Activated naive CD4-positive, alpha-beta T cell treated with anti-CD3 and anti-CD28 coated beads for 36 hours (primary cell): ENCODE measurements at regions of chr2 and their contacts with region 1.

Region 1: DNA sequence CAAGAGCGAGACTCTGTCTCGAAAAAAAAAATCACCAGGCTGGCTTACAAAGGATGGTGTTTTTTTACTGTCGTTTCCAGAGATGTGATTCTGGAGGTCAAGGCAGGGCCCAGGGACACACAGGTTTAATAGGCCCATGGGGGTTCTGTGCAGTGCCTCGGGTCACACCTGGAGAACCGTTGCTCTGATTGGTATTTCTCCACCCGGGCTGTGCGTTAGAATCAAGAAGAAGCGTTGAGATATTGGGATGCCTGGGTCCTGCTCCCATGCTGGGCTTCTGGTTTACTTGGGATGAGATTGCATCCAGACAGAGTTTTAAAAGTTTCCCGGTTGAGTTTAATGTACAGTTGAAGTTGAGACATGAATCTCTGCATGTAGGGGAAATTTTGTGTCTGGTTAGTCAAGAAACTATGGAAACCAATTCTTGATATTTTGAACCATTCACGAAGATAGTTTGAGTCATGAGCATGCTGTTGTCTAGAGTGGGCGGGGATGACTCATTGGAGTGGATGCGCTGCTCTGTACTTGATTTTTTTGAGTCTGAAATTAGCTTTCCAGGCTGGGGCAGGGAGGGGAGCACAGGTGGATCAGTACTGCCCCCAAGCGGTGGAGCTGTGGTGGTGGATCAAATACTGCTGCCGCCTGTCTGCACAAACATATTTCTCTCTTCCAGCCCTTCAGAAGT is 50.1 kb downstream of the GREB1 start:
- DNase-seq: peak; percentile 96
- H3K4me3 Mint-ChIP-seq: no peak overlapping the region
- H3K27ac Mint-ChIP-seq: peak overlapping the region; percentile 6
- H3K4me1 Mint-ChIP-seq: peaks cover 19% of the 10 kb centered on the region
- H3K27me3 Mint-ChIP-seq: peaks cover 6% of the 10 kb centered on the region

Region 2: DNA sequence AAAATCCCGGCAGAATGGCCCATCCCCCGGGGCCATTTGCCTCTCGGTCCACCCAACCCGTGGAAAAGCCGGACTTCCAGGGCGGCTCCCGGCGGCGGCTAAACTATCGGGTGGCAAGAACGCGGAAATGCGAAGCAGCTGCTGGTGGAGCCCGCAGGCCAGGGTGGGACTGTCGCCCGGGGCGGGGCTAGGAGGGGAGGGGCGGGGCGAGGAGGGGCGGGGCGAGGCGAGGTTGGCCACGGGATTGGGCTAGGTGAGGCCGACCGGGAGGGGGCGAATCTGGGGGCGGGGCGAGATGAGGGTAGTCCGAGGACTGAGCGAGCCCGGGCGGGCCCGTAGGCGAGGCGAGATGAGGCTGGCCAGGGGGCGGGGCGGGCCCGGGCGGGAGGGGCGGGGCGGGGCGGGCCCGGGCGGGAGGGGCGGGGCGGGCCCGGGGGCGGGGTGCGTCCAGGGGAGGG is 429.0 kb before region 1 on chr2:
- CTCF ChIA-PET with region 1: no interaction called
- intact Hi-C with region 1: loop called (anchors 1 kb)
- DNase-seq: peak; percentile 99
- H3K4me3 Mint-ChIP-seq: peak overlapping the region; percentile 76
- H3K27ac Mint-ChIP-seq: peak overlapping the region; percentile 61
- H3K4me1 Mint-ChIP-seq: peaks cover 9% of the 10 kb centered on the region
- H3K27me3 Mint-ChIP-seq: no peaks in the 10 kb centered on the region

Region 3: GRCh38 chr2:11344342-11344955 is 239.5 kb before region 1 on chr2 and contains the start of gene ROCK2:
- CTCF ChIA-PET with region 1: interaction called, 4 read pairs
- intact Hi-C with region 1: loop called (anchors 2 kb)
- DNase-seq: peak; percentile 72
- H3K4me3 Mint-ChIP-seq: peak within 1 kb of the TSS; percentile 99
- H3K27ac Mint-ChIP-seq: peak within 1 kb of the TSS; percentile 85
- H3K4me1 Mint-ChIP-seq: peaks cover 29% of the 10 kb centered on the region
- H3K27me3 Mint-ChIP-seq: no peaks in the 10 kb centered on the region
- total RNA-seq, gene ROCK2: 8.4 to 9.4 TPM

Region 4: DNA sequence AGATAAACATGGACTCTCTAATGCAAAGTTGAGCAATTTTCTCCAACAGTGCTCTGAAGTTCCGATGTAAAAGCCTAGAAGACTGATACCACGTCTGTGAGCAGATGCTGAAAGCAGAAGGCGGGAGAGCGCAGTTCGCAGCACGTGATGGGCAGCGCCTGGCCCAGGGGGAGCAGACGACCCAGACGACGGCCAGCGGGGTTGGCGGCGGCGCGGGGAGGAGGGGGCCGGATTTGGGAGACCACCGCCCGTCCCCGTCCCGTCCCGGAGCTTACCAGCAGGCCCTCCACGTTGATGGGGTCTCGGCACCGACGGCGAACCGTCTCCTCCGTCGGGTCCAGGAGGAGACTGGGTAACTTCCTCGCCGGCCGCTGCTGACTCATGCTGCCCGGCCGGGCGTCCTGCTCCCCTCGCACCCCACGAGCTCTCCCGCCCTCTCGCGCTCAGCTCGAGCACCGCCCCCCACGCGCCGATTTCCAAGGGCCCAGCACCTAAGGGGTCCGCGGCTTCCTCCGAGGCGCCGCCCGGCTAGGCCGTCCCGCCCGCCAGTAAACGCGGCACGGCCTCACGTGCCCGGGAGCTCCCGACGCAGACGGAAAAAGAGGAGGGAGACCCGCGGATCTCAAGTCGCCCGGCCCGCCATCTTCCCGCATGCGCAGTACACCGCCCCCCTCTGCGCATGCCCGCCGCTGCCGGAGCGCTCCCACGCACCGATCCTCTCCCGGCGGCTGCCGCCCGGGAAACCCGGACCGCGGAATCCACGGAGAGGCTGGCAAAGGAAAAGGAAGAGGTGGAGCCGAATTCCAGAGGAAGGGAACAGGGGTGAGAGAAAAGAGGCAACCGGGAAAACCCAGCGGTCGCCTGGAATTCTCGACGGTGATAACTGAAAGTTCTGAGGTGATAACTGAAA is 118.2 kb before region 1 on chr2 and contains the start of gene E2F6:
- CTCF ChIA-PET with region 1: interaction called, 28 read pairs
- intact Hi-C with region 1: loop called (anchors 1 kb)
- DNase-seq: peak; percentile 89
- H3K4me3 Mint-ChIP-seq: peak within 1 kb of the TSS; percentile 91
- H3K27ac Mint-ChIP-seq: peak within 1 kb of the TSS; percentile 83
- H3K4me1 Mint-ChIP-seq: peaks cover 40% of the 10 kb centered on the region
- H3K27me3 Mint-ChIP-seq: no peaks in the 10 kb centered on the region
- total RNA-seq, gene E2F6: 8.7 to 9.4 TPM

Region 5: DNA sequence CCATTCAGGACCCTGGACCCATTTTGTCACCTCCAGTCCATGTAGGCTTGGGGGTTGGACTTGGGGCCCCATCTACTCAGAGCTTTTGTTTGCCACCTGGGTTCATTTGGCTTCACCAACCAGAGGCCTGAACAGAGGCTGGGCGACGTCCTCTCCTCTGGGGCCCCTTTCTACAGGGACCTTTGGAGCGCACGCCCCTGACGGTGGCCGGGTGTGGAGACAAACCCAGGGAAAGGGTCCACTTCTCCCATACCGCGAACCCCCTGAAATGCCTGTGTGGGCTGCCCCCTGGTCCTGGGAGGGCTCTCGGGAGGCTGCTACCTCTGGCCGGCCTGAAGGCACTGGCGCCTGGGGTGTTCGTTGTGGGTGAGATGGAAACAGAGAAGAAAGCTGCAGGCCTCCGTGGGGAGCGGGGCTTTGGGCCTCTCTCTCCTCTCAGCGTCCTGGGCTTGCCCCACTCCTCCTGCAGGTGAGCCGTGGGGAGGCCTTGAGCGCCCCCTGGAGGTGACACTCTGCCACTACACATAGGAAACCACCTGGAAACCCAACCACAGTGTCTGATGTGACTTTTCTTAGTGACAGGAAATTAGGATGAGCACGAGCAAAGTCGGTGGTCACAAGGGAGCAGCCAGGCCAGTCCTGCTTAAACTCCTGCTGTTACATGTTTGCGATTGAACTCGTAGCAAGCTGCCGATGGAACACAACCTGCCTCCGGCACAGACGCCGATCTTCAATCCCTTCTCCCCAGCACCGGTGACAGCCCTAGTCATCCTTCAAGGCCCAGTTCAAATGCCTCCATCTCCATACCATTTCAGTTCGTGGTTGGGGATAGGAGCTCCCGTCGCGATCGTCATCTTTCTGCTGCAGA is 98.0 kb after region 1 on chr2:
- CTCF ChIA-PET with region 1: interaction called, 3 read pairs
- intact Hi-C with region 1: loop called (anchors 1 kb)
- DNase-seq: peak; percentile 80
- H3K4me3 Mint-ChIP-seq: no peak overlapping the region
- H3K27ac Mint-ChIP-seq: no peak overlapping the region
- H3K4me1 Mint-ChIP-seq: peaks cover 3% of the 10 kb centered on the region
- H3K27me3 Mint-ChIP-seq: peaks cover 2% of the 10 kb centered on the region

Region 6: DNA sequence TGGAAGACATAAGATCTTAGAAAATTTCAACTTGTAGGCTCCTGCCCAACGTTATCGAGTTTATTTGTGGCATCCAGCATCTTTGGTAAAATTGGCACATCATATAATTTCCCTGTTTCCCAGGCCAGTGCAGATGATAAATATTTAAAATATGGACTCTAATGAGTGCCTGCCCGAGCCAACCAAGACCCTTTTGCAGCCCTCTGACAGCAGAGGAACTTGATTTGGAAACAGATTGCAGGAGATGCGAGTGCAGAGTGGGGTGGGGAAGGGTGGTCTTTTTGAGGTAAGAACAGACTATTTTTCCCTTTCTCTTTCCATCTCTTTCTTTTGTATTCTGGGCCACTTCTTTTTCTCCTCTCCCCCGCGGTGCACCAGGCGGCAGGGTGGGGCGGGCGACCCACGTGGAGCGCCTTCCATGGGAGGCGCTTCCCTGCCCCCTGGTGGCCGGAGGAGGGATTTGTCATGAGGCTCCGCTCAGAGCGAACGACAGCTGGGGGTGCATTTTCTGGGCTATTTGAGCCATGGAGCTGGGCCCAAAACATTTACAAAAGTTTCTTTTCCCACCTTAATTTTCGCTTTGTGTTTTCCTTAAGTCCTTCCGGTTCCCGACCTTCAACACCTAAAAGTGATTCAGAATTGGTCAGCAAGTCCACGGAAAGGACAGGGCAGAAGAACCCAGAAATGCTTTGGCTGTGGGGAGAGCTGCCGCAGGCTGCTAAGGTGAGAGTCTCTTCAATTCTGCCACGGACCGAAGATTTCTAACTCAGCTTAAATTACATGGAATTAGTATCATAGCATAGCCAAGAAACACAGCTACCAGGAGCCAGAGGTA is 195.2 kb after region 1 on chr2:
- CTCF ChIA-PET with region 1: interaction called, 3 read pairs
- intact Hi-C with region 1: loop called (anchors 5 kb)
- DNase-seq: peak; percentile 91
- H3K4me3 Mint-ChIP-seq: peak overlapping the region; percentile 45
- H3K27ac Mint-ChIP-seq: peak overlapping the region; percentile 80
- H3K4me1 Mint-ChIP-seq: peaks cover 44% of the 10 kb centered on the region
- H3K27me3 Mint-ChIP-seq: no peaks in the 10 kb centered on the region